Activated T-helper 2 cell treated with anti-CD3 and anti-CD28 coated beads, Interferon-gamma antibody, Interleukin-2, Interleukin-4, amounts not matched to agents 10 μg/mL and 5 μg/mL and 100 μg/mL, durations not matched to agents 14 hours and 24 hours and 36 hours (primary cell): ENCODE measurements at regions of chr4 and their contacts with region 1.

Region 1: DNA sequence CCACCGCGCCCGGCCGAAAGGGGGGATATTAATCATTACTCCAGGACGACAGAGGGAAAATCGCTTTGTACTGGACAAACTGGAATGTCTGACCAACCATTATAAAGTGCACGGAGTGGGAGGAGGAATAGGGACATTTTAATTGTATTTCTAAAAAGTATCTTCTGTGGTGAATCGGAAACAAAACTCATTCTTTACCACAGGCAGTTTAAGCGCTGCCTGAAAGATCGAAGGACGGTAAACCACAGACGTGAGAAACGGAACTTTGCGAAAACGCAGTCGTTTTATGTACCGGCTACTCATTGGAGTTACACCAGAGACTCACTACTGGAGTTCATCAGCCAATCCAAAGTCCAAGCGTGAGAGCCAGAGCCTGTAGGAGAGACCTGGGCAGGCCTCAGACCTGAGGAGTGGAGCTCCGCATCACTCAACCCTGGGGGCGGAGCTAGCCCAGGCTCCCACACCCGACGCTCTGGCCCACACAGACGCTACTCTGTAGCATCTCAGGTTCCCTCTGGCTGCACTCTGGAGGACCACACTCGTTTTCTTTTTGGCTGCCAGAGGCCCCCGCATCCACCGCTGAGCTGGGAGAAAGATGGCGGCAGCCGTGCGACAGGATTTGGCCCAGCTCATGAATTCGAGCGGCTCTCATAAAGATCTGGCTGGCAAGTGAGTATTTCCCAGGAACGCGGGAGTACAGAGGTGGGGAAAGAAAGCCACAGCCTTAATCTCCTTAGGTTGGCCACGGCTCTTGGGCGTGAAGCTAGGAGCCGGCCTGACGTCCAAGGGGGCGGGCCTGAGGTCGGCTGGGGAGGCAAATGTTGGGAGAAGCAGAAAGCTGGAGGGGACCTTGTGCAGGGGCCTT is at the start of gene COPS4:
- DNase-seq: peak; percentile 96
- H3K4me3 Mint-ChIP-seq: peak within 1 kb of the TSS; percentile 98
- H3K27ac Mint-ChIP-seq: peak within 1 kb of the TSS; percentile 100
- H3K4me1 Mint-ChIP-seq: peaks cover 18% of the 10 kb centered on the region
- H3K27me3 Mint-ChIP-seq: peaks cover 4% of the 10 kb centered on the region
- total RNA-seq, gene COPS4: 33.7 and 35.2 TPM in 2 replicates

Region 2: GRCh38 chr4:83074086-83074704 is 39.3 kb after region 1 on chr4:
- intact Hi-C with region 1: loop called (anchors 1 kb)
- DNase-seq: peak; percentile 62
- H3K4me3 Mint-ChIP-seq: no peak overlapping the region
- H3K27ac Mint-ChIP-seq: no peak overlapping the region
- H3K4me1 Mint-ChIP-seq: peaks cover 26% of the 10 kb centered on the region
- H3K27me3 Mint-ChIP-seq: no peaks in the 10 kb centered on the region